Colonic mucosa (tissue), 4 donors: ENCODE measurements at regions of chr5 and their contacts with region 1.

Region 1: GRCh38 chr5:61617995-61618525 is 286.0 kb downstream of the ZSWIM6 start:
- DNase-seq: no peak
- H3K4me3 ChIP-seq: no peak overlapping the region
- H3K27ac ChIP-seq: no peak overlapping the region
- H3K4me1 ChIP-seq: no peaks in the 10 kb centered on the region
- H3K27me3 ChIP-seq: no peaks in the 10 kb centered on the region
- CTCF ChIP-seq: no peak

Region 2: GRCh38 chr5:59923465-59923864 is 1694.6 kb before region 1 on chr5:
- intact Hi-C with region 1: no loop called
- DNase-seq: no peak
- H3K4me3 ChIP-seq: no peak overlapping the region
- H3K27ac ChIP-seq: no peak overlapping the region
- H3K4me1 ChIP-seq: no peaks in the 10 kb centered on the region
- H3K27me3 ChIP-seq: no peaks in the 10 kb centered on the region
- CTCF ChIP-seq: no peak

Region 3: DNA sequence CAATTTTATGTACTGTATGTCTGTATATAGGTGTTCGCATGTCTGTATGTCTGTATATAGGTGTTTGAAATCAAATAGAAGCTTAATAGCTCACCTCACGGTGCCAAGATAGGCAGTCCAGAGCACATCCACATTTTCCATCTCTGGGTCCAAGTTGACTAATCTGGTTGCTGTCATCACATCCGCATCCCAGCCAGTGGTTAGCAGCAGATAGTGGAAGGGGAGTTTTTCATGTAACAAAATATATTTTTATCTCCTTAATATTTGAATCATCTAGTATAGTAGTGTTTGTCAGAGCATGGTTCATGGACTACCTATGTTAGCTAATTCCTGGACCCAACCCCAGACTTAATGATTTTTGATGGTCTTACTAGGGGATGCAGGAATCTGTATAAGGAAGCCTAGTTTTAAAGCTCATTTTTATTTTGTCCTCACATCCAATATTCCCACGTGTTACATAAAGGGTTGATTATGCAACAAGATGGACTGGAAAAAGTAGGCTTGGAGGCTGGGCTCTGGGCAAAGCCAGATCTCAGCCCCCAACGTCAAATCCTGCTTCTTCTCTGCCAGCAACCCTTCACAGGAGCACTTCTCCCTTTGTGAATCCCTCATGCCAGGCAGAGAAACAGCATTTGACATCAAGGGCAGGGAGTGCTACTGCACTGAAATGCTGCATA is 66.3 kb before region 1 on chr5:
- intact Hi-C with region 1: loop called (anchors 10 kb)
- DNase-seq: no peak
- H3K4me3 ChIP-seq: no peak overlapping the region
- H3K27ac ChIP-seq: no peak overlapping the region
- H3K4me1 ChIP-seq: no peaks in the 10 kb centered on the region
- H3K27me3 ChIP-seq: no peaks in the 10 kb centered on the region
- CTCF ChIP-seq: no peak